Aorta (tissue), 5 donors: ENCODE measurements at regions of chr17 and their contacts with region 1.

Region 1: DNA sequence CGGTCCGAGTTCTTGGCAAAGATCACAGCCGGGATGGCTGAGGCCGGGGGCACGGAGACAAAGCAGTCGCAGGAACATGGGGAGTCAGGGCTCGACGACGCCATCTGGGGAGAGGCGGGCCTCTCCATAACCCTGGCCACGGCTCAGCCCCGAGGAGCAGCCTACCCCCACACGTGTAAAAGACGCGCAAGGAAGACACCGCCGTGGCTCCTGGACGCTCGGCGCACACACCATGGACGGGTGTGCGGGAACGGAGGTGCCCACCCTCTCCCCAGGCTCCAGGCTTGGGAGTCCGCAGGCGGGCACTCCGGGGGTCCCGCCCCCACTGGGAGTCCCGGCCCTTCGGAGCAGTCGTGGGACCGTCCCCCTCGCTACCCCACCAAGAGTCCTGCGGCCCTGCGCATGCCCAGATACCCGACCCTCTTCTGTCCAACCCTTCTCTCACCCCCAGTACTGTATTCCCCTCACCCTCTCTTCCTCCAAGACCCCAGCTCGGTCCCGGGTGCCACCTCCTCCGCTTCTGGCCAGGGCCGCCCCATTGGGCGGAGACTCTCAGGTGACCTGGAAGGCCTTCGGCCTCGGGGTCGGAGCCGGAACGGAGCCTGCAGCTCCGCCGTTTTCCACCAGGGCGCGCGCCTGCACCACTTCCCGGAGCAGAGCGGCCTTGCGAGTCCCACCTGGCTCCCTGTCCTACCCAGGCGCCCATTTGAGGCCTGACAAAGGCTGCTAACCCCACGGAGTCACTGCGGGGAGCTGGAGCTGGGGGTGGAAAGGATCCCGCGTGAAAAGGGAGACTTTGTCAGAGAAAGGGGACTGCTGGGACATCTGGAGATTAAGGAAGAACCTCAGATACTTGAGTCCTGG is at the start of gene SCRN2:
- DNase-seq: peak; percentile 92 to 96
- ATAC-seq: peak; percentile 95
- H3K4me3 ChIP-seq: peak within 1 kb of the TSS; percentile 36 to 54
- H3K27ac ChIP-seq: no peak within 1 kb of the TSS
- H3K4me1 ChIP-seq: no peaks in the 10 kb centered on the region
- H3K27me3 ChIP-seq: no peaks in the 10 kb centered on the region
- total RNA-seq, gene SCRN2: 19.3 to 37.6 TPM

Region 2: DNA sequence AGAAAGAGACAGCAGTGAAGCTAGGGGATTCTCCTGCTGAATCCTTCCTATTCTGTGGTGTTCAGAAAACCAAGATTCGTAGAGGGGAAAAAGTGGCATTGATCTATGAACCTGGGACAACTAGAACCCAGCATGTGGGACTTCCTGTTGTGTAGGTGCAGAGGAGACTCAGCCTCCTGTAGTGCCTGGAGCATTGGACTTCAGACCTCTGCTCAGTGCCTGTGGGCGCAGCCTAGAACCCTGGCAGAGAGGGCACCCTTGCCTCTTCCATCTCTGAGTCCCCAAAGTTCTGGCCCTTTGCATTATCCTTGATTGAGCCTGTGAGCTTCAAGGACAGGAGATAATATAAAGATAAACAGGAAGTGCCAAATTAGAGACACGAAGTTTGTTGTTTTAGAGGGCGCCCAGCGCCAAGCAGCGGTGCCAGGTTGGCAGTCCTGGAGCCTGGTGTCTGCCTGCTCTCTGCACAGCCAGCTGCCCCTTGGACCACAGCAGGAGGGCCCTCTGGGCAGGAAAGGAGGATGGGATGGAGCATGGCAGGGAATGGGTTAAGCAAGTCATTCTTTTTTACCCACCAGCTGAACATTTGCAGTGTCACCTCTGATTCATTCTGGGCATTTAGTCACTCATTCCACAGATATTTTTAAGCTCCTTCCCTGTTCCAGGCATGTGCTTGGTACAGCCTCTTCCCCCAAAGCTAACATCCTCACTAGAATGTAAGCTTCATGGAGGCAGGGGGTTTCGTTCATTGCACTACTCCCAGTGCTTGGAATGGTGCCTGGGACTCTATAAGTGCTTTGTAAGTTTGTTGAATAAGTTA is 21.9 kb after region 1 on chr17:
- intact Hi-C with region 1: no loop called
- DNase-seq: no peak
- ATAC-seq: peak; percentile 27
- H3K4me3 ChIP-seq: no peak overlapping the region
- H3K27ac ChIP-seq: no peak overlapping the region
- H3K4me1 ChIP-seq: no peaks in the 10 kb centered on the region
- H3K27me3 ChIP-seq: no peaks in the 10 kb centered on the region

Region 3: DNA sequence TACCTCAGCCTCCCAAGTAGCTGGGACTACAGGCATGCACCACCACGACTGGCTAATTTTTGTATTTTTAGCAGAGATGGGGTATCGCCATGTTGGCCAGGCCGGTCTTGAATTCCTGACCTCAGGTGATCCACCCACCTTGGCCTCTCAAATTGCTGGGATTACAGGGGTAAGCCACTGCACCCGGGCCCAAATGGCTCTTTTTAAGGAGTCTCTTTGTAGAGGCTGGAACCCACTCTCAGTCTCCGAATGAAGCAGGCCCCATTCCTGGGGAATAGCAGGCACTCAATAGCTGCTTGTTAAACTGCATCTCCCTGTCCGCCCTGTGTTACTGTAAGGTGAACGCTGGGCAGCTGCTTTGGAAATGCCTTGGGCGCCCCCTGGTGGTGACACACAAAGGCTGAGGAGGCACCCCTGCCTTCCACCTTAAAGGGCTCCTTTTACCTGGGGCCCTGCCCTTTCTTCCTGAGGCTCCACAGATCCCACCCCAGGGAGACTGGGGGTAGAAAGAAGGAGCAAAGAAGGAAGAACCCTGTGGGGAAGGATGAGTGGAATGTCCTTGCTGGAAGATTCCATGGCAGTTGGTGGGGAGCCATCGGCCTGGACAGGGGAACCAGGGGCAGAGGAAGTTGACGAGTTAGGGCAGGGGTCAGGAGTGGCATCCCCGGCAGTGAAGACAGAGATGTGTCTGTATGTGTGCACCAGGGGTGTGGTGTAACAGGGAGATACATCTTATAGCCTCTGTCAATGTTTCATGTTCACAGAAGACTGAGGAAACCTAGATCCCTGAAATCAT is 49.0 kb after region 1 on chr17:
- intact Hi-C with region 1: loop called (anchors 1 to 2 kb)
- DNase-seq: peak; percentile 92 to 96
- ATAC-seq: peak; percentile 92
- H3K4me3 ChIP-seq: no peak overlapping the region
- H3K27ac ChIP-seq: no peak overlapping the region
- H3K4me1 ChIP-seq: no peaks in the 10 kb centered on the region
- H3K27me3 ChIP-seq: no peaks in the 10 kb centered on the region